CD4-positive, alpha-beta memory T cell (primary cell): ENCODE measurements at regions of chr10 and their contacts with region 1.

Region 1: GRCh38 chr10:72337020-72337629 is 17.6 kb downstream of the DNAJB12 start:
- DNase-seq: peak in 4 of 5 donors; percentile 44 to 68 (median 50)
- H3K4me3 ChIP-seq: no peak overlapping the region
- H3K4me3 Mint-ChIP-seq: peak overlapping the region in 2 of 8 donors; percentile 17 to 43
- H3K27ac ChIP-seq: peak overlapping the region; percentile 76
- H3K27ac Mint-ChIP-seq: peak overlapping the region; percentile 82 to 98 (median 95)
- H3K4me1 ChIP-seq: peaks cover 62% of the 10 kb centered on the region
- H3K4me1 Mint-ChIP-seq: peaks cover 31 to 69% (median 55%) of the 10 kb centered on the region in 4 donors
- H3K27me3 ChIP-seq: no peaks in the 10 kb centered on the region
- H3K27me3 Mint-ChIP-seq: no peaks in the 10 kb centered on the region

Region 2: GRCh38 chr10:71893920-71894319 is 443.2 kb before region 1 on chr10:
- CTCF ChIA-PET with region 1: interaction called, 15 read pairs
- POLR2A ChIA-PET with region 1: interaction called, 3 read pairs
- intact Hi-C with region 1: loop called (anchors 1 kb)
- DNase-seq: no peak
- H3K4me3 ChIP-seq: no peak overlapping the region
- H3K4me3 Mint-ChIP-seq: no peak overlapping the region
- H3K27ac ChIP-seq: no peak overlapping the region
- H3K27ac Mint-ChIP-seq: no peak overlapping the region
- H3K4me1 ChIP-seq: peaks cover 9% of the 10 kb centered on the region
- H3K4me1 Mint-ChIP-seq: peaks cover 2 to 12% (median 6%) of the 10 kb centered on the region in 4 donors
- H3K27me3 ChIP-seq: no peaks in the 10 kb centered on the region
- H3K27me3 Mint-ChIP-seq: peaks cover 1 to 7% of the 10 kb centered on the region in 2 donors

Region 3: GRCh38 chr10:72079356-72079755 is 257.8 kb before region 1 on chr10:
- CTCF ChIA-PET with region 1: interaction called, 12 read pairs
- POLR2A ChIA-PET with region 1: interaction called, 7 read pairs
- intact Hi-C with region 1: no loop called
- DNase-seq: peak; percentile 55 to 85 (median 71)
- H3K4me3 ChIP-seq: peak overlapping the region in 1 of 2 donors; percentile 25
- H3K4me3 Mint-ChIP-seq: peak overlapping the region; percentile 47 to 96 (median 81)
- H3K27ac ChIP-seq: peak overlapping the region; percentile 94
- H3K27ac Mint-ChIP-seq: peak overlapping the region; percentile 86 to 97 (median 93)
- H3K4me1 ChIP-seq: peaks cover 97% of the 10 kb centered on the region
- H3K4me1 Mint-ChIP-seq: peaks cover 59 to 99% (median 87%) of the 10 kb centered on the region in 4 donors
- H3K27me3 ChIP-seq: no peaks in the 10 kb centered on the region
- H3K27me3 Mint-ChIP-seq: no peaks in the 10 kb centered on the region

Region 4: GRCh38 chr10:72133517-72133916 is 203.6 kb before region 1 on chr10:
- CTCF ChIA-PET with region 1: interaction called, 196 read pairs
- POLR2A ChIA-PET with region 1: no interaction called
- intact Hi-C with region 1: loop called (anchors 1 kb)
- DNase-seq: no peak
- H3K4me3 ChIP-seq: no peak overlapping the region
- H3K4me3 Mint-ChIP-seq: peak overlapping the region in 1 of 8 donors; percentile 11
- H3K27ac ChIP-seq: no peak overlapping the region
- H3K27ac Mint-ChIP-seq: peak overlapping the region in 5 of 7 donors; percentile 15 to 74 (median 45)
- H3K4me1 ChIP-seq: peaks cover 28% of the 10 kb centered on the region
- H3K4me1 Mint-ChIP-seq: peaks cover 23 to 36% (median 28%) of the 10 kb centered on the region in 4 donors
- H3K27me3 ChIP-seq: no peaks in the 10 kb centered on the region
- H3K27me3 Mint-ChIP-seq: no peaks in the 10 kb centered on the region

Region 5: DNA sequence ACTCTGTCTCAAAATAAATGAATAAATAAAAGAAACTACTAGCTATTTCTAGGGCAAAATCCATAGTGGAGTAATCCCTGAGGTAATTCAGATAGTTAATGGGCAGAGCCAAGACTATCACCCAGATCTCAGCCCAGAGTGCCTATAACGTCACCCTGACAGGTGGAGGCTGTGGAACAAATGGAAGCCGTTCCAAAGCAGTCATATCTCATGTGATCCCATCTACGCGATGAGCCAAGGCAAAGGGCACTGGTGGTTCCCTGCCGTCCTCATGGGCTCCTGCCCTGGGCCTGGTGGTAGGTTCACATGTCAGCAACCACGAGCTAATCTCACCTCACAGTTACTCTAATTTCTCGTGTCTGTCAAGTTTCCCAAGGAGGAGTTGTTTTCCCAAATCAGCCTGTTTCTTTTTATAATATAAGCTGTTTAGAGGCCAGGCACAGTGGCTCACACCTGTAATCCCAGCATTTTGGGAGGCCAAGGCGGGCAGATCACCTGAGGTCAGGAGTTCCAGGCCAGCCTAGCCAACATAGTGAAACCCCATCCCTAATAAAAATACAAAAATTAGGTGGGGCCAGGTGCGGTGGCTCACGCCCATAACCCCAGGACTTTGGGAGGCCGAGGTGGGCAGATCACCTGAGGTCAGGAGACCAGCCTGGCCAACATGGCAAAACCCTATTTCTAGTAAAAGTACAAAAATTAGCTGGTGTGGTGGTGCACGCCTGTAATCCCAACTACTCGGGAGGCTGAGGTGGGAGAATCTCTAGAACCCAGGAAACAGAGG is 98.5 kb before region 1 on chr10:
- CTCF ChIA-PET with region 1: interaction called, 13 read pairs
- POLR2A ChIA-PET with region 1: interaction called, 3 read pairs
- intact Hi-C with region 1: no loop called
- DNase-seq: no peak
- H3K4me3 ChIP-seq: no peak overlapping the region
- H3K4me3 Mint-ChIP-seq: no peak overlapping the region
- H3K27ac ChIP-seq: no peak overlapping the region
- H3K27ac Mint-ChIP-seq: peak overlapping the region in 3 of 7 donors; percentile 53 to 64 (median 56)
- H3K4me1 ChIP-seq: peaks cover 12% of the 10 kb centered on the region
- H3K4me1 Mint-ChIP-seq: peaks cover 19 to 36% (median 29%) of the 10 kb centered on the region in 4 donors
- H3K27me3 ChIP-seq: no peaks in the 10 kb centered on the region
- H3K27me3 Mint-ChIP-seq: no peaks in the 10 kb centered on the region

Region 6: DNA sequence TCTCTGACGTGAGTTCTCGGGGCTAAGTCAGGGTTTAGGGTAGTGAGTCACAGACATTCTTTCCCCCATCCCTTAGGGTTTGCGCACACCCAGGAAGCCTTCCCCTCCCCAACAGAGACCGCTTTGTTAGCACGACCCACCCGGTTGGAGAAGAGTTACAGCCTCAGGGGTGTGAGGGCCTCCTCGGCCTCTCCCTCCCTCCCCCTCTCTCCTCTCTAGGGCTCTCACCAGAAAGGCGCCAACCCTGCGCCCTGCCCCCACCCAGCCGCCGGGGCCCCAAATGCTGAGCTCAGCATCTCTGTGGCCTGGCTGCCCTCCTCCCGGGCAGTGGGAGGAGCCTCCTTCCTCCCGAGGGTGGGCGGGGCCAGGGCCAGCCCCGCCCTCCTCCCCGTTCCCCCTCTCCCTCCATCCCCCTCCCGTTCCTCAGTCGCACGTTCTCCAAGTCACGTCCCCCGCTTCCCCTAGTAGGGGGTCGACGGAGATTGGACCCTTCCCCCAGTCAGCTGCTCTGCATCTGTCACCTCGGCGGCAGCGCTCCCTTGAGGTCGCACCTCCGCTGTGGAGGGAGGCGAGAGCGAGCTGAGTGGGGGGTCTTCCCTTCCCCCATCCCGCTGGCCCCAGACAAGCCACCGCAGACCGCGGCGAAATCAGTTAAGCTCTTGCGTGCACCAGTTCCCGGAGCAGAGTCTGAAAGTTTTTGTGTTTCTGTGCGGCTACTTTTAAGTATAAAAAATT is 76.4 kb before region 1 on chr10:
- CTCF ChIA-PET with region 1: interaction called, 11 read pairs
- POLR2A ChIA-PET with region 1: interaction called, 14 read pairs
- intact Hi-C with region 1: no loop called
- DNase-seq: peak; percentile 77 to 92 (median 80)
- H3K4me3 ChIP-seq: peak overlapping the region; percentile 52 to 90
- H3K4me3 Mint-ChIP-seq: peak overlapping the region; percentile 84 to 93 (median 89)
- H3K27ac ChIP-seq: peak overlapping the region; percentile 74
- H3K27ac Mint-ChIP-seq: peak overlapping the region; percentile 95 to 98 (median 96)
- H3K4me1 ChIP-seq: peaks cover 89% of the 10 kb centered on the region
- H3K4me1 Mint-ChIP-seq: peaks cover 49 to 77% (median 63%) of the 10 kb centered on the region in 4 donors
- H3K27me3 ChIP-seq: no peaks in the 10 kb centered on the region
- H3K27me3 Mint-ChIP-seq: no peaks in the 10 kb centered on the region

Region 7: DNA sequence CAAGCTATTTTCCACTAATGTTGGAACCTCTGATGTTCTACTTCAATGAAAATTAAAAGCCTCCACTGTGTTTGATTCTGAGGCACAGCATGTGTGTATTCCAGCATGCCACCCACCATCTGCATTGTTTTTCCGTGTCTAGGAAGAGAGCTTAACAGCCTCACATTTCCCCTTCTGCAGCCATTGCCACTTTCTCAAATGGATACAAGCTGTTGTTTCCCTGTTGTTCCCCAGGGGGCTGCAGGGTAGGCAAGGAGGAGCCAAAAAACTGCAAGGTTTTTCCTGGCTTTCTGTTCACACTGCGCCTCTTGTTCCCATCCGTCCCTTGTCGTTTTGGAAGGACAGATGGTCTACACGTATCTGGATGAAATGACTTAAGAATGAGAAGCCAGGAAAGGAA is 89.9 kb after region 1 on chr10:
- CTCF ChIA-PET with region 1: no interaction called
- POLR2A ChIA-PET with region 1: no interaction called
- intact Hi-C with region 1: no loop called
- DNase-seq: no peak
- H3K4me3 ChIP-seq: no peak overlapping the region
- H3K4me3 Mint-ChIP-seq: no peak overlapping the region
- H3K27ac ChIP-seq: no peak overlapping the region
- H3K27ac Mint-ChIP-seq: no peak overlapping the region
- H3K4me1 ChIP-seq: no peaks in the 10 kb centered on the region
- H3K4me1 Mint-ChIP-seq: no peaks in the 10 kb centered on the region
- H3K27me3 ChIP-seq: no peaks in the 10 kb centered on the region
- H3K27me3 Mint-ChIP-seq: no peaks in the 10 kb centered on the region